Posterior cingulate gyrus (tissue), 11 donors: ENCODE measurements at regions of chr15 and their contacts with region 1.

Region 1: GRCh38 chr15:99076552-99077308 is 28.1 kb upstream of the SYNM start:
- DNase-seq: peak in 4 of 10 donors; percentile 22 to 41 (median 31)

Region 2: DNA sequence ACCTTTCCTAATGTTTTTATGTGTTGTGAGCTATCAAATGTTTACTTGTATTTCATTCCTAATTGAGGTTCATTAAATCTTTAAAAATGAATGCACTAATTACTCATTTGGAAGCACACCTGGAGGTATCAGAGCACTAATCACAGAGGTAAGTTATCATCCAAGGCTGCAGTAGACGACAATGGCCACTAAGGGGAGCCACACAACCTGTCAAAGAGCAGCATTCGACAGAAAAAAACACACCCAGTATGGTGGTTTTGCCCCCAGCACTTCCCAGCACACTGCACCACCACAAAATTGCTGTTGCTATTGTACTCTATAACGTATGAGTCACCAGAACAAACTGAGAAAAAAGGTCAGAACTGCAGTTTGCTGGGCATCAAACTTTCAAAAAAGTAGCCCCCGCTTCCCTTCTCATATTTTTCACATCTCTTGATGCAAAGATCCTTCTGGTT is 634.3 kb before region 1 on chr15:
- intact Hi-C with region 1: loop called (anchors 2 kb)
- DNase-seq: peak in 4 of 10 donors; percentile 41 to 66 (median 47)

Region 3: GRCh38 chr15:98518823-98519561 is 557.7 kb before region 1 on chr15:
- intact Hi-C with region 1: loop called (anchors 1 kb)
- DNase-seq: peak in 5 of 10 donors; percentile 30 to 73 (median 45)

Region 4: GRCh38 chr15:98904544-98904943 is 172.2 kb before region 1 on chr15:
- intact Hi-C with region 1: loop called (anchors 10 kb)
- DNase-seq: peak in 6 of 10 donors; percentile 43 to 93 (median 58)

Region 5: DNA sequence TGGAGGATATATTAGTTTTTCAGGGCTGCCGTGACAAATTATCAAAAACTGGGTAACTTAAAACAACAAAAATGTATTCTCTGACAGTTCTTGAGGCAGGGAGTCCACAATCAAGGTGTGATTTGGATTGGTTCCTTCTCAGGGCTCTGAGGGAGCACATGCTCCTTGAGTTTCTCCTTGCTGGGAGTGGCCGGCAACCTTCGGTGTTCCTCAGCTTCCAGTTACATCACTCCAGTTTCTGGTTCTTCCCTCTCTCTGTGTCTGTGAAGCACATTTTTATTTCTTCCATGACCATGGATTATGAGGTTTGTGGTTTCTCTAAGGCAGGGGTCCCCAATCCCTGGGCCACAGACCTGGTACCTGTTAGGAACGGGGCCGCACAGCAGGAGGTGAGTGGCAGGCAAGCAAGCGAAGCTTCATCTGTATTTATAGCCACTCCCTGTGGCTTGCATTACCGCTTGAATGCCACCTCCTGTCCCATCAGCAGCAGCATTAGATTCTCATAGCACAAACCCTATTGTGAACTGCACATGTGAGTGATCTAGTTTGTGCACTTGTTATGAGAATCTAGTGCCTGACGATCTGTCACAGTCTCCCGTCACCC is 198.9 kb after region 1 on chr15:
- intact Hi-C with region 1: no loop called
- DNase-seq: no peak